HEK293 (cell line): ENCODE measurements at regions of chr6 and their contacts with region 1.

Region 1: DNA sequence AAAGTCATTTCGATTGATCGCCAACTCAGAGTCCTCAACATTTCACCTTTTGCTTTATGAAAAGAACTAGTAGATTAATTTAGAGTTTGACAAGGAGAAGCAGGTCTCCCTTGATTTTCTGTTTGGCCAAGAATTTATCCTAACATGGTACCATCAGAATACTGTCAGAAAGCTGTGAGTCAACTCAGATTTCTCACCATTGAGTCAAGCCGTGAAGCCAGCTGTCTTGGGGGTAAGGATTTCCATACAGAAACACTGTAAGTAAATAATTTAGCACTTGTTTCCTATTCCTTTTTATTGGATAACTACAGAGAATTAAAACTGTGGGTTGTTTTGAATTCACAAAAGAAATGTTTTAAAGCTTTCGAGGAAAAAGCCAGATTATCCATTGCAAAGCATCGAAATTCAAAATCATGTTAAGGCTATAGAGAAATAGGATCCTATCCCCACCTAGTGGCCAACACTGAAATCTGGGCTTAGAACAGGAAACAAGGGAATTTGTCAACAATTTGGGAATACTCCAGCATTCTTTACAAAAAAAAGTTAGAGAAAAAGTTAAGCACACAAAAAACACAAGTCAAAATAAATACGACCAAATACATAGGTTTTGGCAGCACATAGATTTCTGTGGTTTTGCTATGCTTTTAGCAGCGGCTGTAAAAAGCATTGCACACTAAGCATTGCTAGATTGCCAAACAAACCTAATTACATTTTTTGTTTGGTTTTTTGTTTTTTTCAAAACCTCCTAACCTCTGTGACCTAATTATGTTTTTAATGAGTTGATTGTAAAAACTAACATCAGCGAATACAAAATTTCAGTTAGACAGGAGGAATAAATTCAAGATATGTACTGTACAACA is 44.2 kb downstream of the COL11A2 start:
- H3K4me3 ChIP-seq: no peak overlapping the region
- H3K27ac ChIP-seq: no peak overlapping the region
- H3K4me1 ChIP-seq: no peaks in the 10 kb centered on the region
- CTCF ChIP-seq: 0 out of 2 replicates have a peak, but pooled peaks have one; percentile 30

Region 2: GRCh38 chr6:32962213-32962826 is 185.7 kb before region 1 on chr6:
- CTCF ChIA-PET with region 1: no interaction called
- POLR2A ChIA-PET with region 1: no interaction called
- H3K4me3 ChIP-seq: no peak overlapping the region
- H3K27ac ChIP-seq: no peak overlapping the region
- H3K4me1 ChIP-seq: peaks cover 10% of the 10 kb centered on the region
- CTCF ChIP-seq: no peak

Region 3: DNA sequence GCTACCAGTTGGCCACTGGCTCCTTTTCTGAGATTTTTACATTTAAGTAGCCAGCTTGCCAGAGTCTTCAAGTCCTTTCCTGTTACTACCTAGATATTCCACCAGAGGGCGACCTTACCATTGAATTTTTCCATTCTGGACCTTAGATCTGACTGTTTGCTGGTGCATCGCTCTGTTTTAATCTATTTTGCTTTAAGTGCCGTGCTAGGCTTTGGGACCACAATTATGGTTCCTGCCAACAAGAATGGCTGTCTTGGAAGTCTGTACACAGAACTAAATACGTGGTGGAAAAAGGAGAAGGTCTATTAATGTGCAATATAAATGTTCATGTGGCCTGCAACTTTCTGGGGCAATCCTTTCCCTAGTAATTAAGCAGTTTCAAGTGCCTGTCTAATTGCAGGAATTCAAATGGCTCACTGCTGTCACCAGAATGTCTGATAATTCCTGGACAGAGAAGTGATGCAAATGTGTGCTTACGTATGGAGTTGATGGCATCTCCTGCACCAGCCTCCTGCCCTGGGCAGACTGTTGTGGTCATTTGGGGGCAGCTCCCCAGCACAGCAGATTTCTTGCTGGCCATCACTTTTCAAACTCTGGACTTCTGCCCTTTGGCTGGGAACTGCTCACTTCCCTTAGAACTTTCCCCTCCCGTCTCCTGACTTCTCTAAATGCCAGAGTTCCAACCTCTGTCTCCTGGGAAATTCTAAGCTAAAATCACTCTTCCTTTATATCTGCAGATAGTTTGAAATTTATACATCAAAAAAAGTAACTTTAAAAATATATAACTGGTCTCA is 133.0 kb before region 1 on chr6:
- CTCF ChIA-PET with region 1: interaction called, 106 read pairs
- POLR2A ChIA-PET with region 1: no interaction called
- H3K4me3 ChIP-seq: no peak overlapping the region
- H3K27ac ChIP-seq: no peak overlapping the region
- H3K4me1 ChIP-seq: no peaks in the 10 kb centered on the region
- CTCF ChIP-seq: peak; percentile 57

Region 4: DNA sequence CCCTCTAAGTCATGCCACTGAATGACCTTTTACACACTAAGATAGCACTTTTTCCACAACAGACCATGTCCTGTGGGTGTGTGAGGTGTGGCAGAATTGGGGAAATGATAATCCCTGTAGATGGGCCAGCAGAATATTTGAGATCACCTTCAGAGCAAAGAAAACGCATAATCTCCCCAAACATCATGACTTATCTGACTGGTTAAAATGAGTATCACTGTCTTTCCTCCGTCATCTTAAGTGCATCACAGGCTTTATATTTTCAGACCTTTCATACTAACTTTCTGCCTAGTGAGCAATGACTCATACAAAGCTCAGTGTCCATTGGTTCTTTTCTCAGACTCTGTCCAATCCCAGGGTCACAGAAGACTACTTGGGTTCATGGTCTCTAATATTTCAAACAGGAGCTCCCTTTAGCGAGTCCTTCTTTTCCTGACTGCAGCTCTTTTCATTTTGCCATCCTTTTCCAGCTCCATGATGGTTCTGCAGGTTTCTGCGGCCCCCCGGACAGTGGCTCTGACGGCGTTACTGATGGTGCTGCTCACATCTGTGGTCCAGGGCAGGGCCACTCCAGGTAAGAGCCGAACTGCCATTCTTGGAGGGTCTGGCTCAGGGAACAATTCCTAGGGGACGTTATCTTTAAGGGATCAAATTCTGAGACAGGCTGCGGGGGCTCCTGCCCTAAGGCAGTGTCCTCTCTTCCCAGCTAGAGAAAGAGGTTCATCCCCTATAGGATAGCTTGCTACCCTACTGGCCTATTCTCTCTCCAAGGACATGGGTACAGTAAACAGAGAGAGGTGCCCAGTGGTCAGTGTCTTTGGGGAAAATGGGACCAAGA is 72.2 kb before region 1 on chr6 and contains the start of gene HLA-DPB1:
- CTCF ChIA-PET with region 1: no interaction called
- POLR2A ChIA-PET with region 1: no interaction called
- H3K4me3 ChIP-seq: no peak within 1 kb of the TSS
- H3K27ac ChIP-seq: no peak within 1 kb of the TSS
- H3K4me1 ChIP-seq: peaks cover 5% of the 10 kb centered on the region
- CTCF ChIP-seq: no peak

Region 5: DNA sequence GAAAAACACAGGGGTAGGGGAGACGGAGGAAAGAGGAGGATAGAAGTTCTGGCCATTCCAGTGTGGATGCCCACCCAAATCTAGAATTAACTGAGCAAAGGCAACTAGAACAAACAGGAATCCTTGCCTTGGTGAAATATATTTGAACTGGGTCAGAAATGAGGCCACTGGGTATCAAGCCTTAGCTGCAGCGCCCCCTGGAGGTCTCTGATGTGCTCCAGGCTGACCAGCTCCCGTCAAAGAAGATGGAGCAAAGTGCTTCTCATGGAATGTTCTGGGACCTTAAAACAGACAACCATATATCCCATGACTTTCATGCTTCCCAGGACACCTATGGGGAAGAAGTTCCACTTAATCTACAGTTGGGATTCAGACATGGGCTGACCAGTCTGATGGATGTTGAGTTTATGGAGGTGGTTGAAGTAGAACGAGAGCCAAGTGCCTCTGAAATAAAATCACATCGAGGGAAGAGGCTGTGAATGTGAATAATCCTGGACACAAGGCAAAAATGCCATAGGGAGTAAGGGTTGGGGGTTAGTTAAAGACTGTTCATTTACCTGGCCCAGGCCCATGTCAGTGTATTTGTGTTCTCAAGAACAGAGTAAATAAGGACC is 21.8 kb before region 1 on chr6:
- CTCF ChIA-PET with region 1: interaction called, 176 read pairs
- POLR2A ChIA-PET with region 1: no interaction called
- H3K4me3 ChIP-seq: no peak overlapping the region
- H3K27ac ChIP-seq: no peak overlapping the region
- H3K4me1 ChIP-seq: no peaks in the 10 kb centered on the region
- CTCF ChIP-seq: no peak

Region 6: GRCh38 chr6:33161354-33162331 is 13.6 kb after region 1 on chr6:
- CTCF ChIA-PET with region 1: interaction called, 62 read pairs
- POLR2A ChIA-PET with region 1: no interaction called
- H3K4me3 ChIP-seq: peak overlapping the region; percentile 26
- H3K27ac ChIP-seq: peak overlapping the region; percentile 13; the same call in 1 of the 2 replicates
- H3K4me1 ChIP-seq: 0 out of 2 replicates have a peak, but pooled peaks cover 2% of the 10 kb centered on the region
- CTCF ChIP-seq: peak; percentile 90

Region 7: GRCh38 chr6:33200219-33201146 is 52.4 kb after region 1 on chr6 and contains the starts of genes RXRB and SLC39A7:
- CTCF ChIA-PET with region 1: interaction called, 10 read pairs
- POLR2A ChIA-PET with region 1: interaction called, 7 read pairs
- H3K4me3 ChIP-seq: peak within 1 kb of the TSS; percentile 75
- H3K27ac ChIP-seq: peak within 1 kb of the TSS; percentile 98
- H3K4me1 ChIP-seq: peaks cover 23% of the 10 kb centered on the region
- CTCF ChIP-seq: no peak